PC-9 (cell line): ENCODE measurements at regions of chr16 and their contacts with region 1.

Region 1: GRCh38 chr16:30378236-30379204 is 3.8 kb downstream of the SEPTIN1 start:
- DNase-seq: peak; percentile 91 to 100
- H3K4me3 ChIP-seq: peak overlapping the region; percentile 80
- H3K27ac ChIP-seq: peak overlapping the region; percentile 92
- H3K4me1 ChIP-seq: peaks cover 19% of the 10 kb centered on the region
- H3K27me3 ChIP-seq: no peaks in the 10 kb centered on the region
- CTCF ChIP-seq: peak; percentile 18; the same call in 1 of the 2 replicates

Region 2: DNA sequence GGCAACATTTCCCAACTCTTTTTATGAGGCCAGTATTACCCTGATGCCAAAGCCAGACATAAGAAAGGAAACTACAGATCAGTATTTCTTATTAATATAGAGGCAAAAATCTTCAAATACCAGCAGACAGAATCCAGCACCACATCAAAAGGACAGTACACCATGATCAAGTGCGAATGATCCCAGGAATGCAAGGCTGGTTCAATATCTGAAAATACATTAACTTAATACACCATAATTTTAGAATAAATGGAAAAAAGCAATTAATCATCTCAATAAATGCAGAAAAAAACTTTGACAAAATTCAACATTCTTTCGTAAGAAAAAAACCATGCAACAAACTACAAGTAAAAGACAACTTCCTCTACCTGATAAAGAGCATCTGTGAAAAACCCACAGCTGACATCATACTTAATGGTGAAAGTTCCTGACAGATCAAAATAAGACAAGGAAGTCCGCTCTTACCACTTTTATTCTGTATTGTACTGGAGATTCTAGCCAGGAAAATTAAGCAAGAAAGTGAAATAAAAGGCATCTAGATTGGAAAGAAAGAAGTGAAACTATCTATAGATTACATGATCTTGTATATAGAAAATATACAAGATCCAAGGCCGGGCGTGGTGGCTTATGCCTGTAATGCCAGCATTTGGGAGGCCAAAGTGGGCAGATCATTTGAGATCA is 229.1 kb before region 1 on chr16:
- CTCF ChIA-PET with region 1: no interaction called
- POLR2A ChIA-PET with region 1: no interaction called
- intact Hi-C with region 1: no loop called
- DNase-seq: no peak
- H3K4me3 ChIP-seq: no peak overlapping the region
- H3K27ac ChIP-seq: no peak overlapping the region
- H3K4me1 ChIP-seq: no peaks in the 10 kb centered on the region
- H3K27me3 ChIP-seq: no peaks in the 10 kb centered on the region
- CTCF ChIP-seq: no peak

Region 3: DNA sequence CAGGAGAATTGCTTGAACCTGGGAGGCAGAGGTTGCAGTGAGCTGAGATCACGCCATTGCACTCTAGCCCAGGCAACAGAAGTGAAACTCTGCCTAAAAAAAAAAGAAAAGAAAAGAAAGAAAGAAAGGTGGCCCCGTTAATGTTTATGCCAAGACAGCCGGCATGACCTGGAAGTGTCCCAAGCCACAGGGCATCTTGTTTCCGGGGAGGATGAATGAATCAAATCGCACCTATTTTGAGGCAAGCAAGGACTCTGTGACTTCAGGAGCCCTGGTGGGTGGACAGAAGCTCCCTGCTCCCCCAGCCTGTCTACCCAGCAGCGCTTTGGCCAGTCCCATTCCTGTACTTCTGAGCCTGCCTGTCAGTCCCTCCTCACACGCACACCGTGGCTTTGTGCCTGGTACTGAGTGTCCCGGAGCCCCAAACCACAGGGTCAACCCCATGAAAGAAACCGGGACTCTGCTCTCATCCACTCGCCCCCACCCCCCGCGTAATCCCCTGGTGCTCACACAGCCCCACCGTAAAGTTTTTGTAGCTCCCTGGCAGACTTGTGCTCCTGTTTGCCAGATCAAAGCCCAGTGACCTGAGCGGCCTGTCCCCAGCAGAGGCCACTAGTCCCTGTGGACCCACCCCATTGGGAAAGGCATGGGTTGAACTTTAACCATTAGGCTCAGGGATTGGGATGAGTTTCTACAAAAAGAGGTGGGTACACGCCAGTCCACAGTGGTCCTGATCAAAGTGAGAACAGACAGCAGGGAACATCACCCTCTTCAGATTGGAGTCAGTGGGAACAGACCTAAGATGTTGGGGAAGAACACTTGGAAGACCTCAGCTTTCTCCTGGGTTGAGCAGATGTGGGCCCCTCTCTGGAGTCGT is 42.7 kb before region 1 on chr16:
- CTCF ChIA-PET with region 1: no interaction called
- POLR2A ChIA-PET with region 1: interaction called, 5 read pairs
- intact Hi-C with region 1: loop called (anchors 2 kb)
- DNase-seq: peak in 1 of 2 experiments; percentile 66
- H3K4me3 ChIP-seq: peak overlapping the region; percentile 59
- H3K27ac ChIP-seq: peak overlapping the region; percentile 76
- H3K4me1 ChIP-seq: peaks cover 13% of the 10 kb centered on the region
- H3K27me3 ChIP-seq: no peaks in the 10 kb centered on the region
- CTCF ChIP-seq: no peak

Region 4: DNA sequence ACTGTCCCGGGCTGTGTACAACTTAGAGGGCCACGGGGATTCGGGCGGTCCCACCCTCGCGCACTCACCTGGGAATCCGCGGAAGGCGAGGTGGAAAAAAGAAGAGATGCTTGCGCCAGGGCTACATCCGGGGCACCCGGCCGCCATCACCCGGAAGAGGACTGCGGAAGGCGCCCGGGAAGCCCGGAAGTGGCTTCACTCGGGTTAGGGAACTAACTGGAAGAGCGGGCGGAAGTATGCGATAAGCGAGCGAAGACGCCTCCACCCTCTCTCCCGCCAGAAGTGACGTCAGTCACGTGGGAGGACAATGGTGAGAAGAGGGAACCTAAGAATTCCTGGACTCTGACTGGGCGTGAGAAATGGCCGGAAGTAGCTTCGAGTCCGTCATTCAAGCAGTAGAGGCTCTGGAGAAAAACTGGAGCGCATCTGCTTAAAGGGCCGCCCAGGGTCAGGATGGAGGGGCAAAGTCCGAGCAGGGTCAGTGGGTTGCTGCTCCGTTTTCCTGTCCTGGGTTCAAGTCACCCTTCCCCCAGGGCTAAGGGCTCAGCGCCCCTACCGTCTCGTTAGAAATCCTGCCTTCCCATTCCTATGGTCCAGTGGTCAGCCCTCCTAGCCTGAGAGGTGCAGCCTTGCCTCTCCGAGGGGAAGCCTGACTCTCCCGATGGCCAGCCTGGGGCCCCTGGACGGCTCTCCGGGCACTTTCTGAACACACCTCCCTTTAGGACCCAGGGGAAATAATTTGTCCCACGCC is 23.2 kb before region 1 on chr16 and contains the start of gene CD2BP2:
- CTCF ChIA-PET with region 1: no interaction called
- POLR2A ChIA-PET with region 1: no interaction called
- intact Hi-C with region 1: loop called (anchors 1 kb)
- DNase-seq: peak; percentile 97 to 99
- H3K4me3 ChIP-seq: peak within 1 kb of the TSS; percentile 99
- H3K27ac ChIP-seq: peak within 1 kb of the TSS; percentile 82
- H3K4me1 ChIP-seq: peaks cover 19% of the 10 kb centered on the region
- H3K27me3 ChIP-seq: no peaks in the 10 kb centered on the region
- CTCF ChIP-seq: no peak
- total RNA-seq, gene CD2BP2: 84.6 TPM in 2 replicates

Region 5: DNA sequence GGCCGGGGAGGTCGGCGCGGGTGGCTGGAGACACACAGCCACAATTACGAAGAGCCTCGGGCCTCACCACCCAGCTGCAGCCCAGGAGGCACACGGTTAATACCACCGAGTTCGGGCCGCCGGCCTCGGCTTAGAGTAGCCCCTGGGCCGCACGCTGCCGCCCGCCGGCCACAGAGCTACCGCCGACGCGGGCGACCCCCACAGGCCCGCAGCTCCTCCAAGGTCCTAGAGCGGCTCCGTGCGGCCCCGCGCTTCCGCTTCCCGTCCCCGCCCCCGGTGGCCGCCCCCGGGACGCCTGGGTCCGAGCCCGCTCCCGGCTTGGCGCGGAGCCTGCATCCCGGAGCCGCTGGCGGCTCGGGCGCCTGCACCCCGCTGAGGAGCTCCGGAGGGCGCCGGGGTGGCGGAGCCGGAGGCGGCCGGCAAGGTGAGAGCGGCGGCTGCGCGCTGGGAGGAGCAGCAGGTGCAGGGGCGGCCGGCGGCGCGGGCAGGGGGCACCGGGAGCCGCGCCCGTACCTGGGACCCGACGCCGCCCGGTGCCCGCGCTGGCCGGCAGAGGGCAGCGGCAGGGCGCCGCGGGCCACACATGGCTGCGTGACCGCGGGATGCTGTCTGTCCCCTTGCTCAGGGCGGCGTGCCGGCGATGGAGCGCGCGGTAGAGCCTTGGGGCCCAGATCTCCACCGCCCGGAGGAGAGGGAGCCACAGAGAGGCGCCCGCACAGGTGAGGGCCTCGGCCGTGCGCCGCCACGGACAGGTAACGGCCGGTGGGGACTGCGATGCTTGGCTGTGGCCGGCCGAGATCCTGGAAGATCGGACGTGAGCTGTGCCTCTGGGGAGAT is 16.9 kb after region 1 on chr16 and contains the start of gene ZNF48:
- CTCF ChIA-PET with region 1: interaction called, 5 read pairs
- POLR2A ChIA-PET with region 1: interaction called, 17 read pairs
- intact Hi-C with region 1: loop called (anchors 1 kb)
- DNase-seq: peak; percentile 72 to 93
- H3K4me3 ChIP-seq: peak within 1 kb of the TSS; percentile 98
- H3K27ac ChIP-seq: peak within 1 kb of the TSS; percentile 68
- H3K4me1 ChIP-seq: peaks cover 19% of the 10 kb centered on the region
- H3K27me3 ChIP-seq: no peaks in the 10 kb centered on the region
- CTCF ChIP-seq: no peak; the same call in 1 of the 2 replicates
- total RNA-seq, gene ZNF48: 20.1 and 25.9 TPM in 2 replicates

Region 6: GRCh38 chr16:30417529-30418349 is 39.2 kb after region 1 on chr16:
- CTCF ChIA-PET with region 1: no interaction called
- POLR2A ChIA-PET with region 1: no interaction called
- intact Hi-C with region 1: no loop called
- DNase-seq: peak; percentile 81 to 94
- H3K4me3 ChIP-seq: peak overlapping the region; percentile 69
- H3K27ac ChIP-seq: peak overlapping the region; percentile 49; the same call in 1 of the 2 replicates
- H3K4me1 ChIP-seq: peaks cover 7% of the 10 kb centered on the region; the same call in 1 of the 2 replicates
- H3K27me3 ChIP-seq: no peaks in the 10 kb centered on the region
- CTCF ChIP-seq: no peak

Region 7: GRCh38 chr16:30526823-30527635 is 148.5 kb after region 1 on chr16:
- CTCF ChIA-PET with region 1: no interaction called
- POLR2A ChIA-PET with region 1: interaction called, 4 read pairs
- intact Hi-C with region 1: loop called (anchors 5 kb)
- DNase-seq: peak; percentile 94 to 100
- H3K4me3 ChIP-seq: peak overlapping the region; percentile 97
- H3K27ac ChIP-seq: peak overlapping the region; percentile 79
- H3K4me1 ChIP-seq: peaks cover 32% of the 10 kb centered on the region
- H3K27me3 ChIP-seq: no peaks in the 10 kb centered on the region
- CTCF ChIP-seq: peak; percentile 50; the same call in 1 of the 2 replicates

Region 8: DNA sequence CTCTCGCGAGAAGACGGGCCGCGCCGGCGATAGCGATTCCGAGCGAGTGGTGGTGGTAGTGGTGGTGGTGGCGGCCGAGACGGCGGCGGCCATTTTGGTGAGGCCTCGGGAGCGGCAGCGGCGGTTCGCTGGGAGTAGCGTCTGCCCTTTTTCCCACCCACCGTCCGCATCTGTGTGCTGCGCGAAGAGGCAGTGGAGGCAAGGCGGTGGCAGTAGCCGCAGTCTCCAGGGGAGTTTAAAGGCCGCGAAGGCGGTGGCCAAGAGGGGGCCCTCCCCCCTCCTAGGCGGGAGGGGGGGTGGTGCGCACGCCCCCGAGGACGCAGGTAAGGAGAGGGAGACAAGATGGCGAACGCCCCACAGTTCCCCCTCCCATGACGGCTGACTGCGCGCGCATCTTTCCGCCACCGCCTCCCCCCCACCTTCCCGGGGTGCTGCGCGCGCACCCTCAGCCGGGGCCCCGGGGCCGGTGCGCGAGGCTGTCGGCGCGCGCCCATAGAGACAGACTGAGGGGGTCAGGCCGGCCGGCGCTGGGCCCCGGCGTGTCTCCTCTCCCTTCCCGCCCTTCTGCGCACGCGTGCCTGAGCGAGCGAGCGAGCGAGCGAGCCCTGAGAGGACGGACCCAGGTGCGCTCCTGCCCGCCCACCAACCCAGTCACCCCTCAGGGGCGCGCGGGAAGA is 319.8 kb after region 1 on chr16:
- CTCF ChIA-PET with region 1: no interaction called
- POLR2A ChIA-PET with region 1: no interaction called
- intact Hi-C with region 1: loop called (anchors 1 kb)
- DNase-seq: peak; percentile 91 to 99
- H3K4me3 ChIP-seq: peak overlapping the region; percentile 96
- H3K27ac ChIP-seq: peak overlapping the region; percentile 95
- H3K4me1 ChIP-seq: peaks cover 22% of the 10 kb centered on the region
- H3K27me3 ChIP-seq: no peaks in the 10 kb centered on the region
- CTCF ChIP-seq: no peak

Region 9: DNA sequence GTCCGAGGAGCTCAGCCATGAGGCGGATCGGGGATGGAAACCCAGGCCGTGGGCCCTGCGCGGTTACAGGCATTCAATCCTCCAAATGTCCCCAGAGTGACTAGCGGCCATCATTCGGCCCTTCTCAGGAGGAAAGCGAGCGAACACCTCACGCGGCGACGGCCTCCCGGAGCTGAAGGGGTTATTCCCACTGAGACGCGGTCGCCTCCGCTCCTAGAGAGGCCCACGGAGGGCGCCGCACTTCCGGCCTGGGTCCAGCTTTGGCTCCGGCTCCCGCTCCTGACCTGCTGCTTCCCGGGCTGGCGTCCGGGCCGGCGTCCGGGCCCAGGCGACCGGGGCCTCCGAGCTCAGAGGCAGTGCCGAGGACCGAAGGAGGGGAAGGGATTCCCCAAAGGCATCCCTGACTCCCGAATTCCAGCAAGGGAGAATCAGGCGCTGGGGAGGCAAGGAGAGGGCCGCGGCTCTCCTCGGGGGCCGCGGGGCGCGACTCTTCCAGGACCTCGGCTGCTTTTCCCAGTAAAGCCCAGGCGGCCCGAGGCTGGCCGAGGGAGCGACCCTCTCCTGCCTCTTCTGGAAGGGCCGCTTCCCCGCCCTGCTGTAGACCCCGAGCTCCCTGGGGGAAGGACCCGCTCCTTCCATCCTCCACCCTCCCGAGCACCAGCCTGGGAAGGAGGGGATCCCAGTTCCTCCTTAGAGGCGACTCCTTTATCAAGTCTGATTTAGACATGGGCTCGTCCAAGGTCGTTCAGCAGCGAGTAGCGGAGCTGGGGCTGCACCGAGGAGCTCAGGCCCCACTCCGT is 427.1 kb after region 1 on chr16:
- CTCF ChIA-PET with region 1: no interaction called
- POLR2A ChIA-PET with region 1: interaction called, 19 read pairs
- intact Hi-C with region 1: no loop called
- DNase-seq: peak; percentile 61 to 87
- H3K4me3 ChIP-seq: peak overlapping the region; percentile 78
- H3K27ac ChIP-seq: peak overlapping the region; percentile 60
- H3K4me1 ChIP-seq: peaks cover 12% of the 10 kb centered on the region
- H3K27me3 ChIP-seq: no peaks in the 10 kb centered on the region
- CTCF ChIP-seq: no peak; the same call in 1 of the 2 replicates